ENCODE measurements at regions of chr12 and their contacts with region 1.

Region 1: DNA sequence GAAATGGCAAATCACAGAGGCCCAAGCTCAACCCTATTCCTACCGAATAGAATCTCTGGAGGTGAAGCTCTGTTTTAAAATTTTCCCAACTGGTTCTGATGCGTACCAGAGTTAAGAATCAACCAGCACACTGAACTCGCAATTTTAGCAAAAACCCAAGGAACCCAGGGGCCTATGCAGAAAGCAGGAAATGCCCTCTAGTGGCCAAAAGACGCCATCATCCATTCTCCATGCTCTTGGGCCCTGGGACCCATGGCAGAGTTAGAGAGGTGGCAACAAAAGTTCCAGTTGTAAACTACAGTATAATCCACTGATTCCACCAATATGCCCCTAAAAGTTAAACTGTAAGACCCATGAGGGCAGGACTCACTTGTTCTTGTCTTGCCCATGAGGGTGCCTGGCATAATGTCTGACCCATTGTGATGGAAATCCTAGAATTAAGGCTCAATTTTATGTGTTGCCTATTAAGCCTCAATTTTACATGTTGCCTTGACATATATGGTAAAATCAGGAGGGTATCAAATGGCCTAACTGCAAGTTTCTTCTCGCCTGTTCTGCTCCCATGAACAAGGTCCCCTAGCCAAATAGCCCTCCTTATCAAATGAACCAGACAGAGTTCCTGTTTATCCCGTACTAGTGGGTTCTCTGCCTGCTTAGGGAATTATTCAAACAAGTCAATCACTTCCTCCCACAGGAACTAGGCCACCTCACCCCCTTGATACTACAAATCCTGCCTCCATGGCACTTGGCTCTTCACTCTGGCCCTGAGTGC is 137.5 kb upstream of the CPM start:
- DNase-seq: peak; percentile 45 to 79
- H3K4me3 ChIP-seq: no peak overlapping the region
- H3K4me1 ChIP-seq: peaks cover 13% of the 10 kb centered on the region
- H3K27me3 ChIP-seq: no peaks in the 10 kb centered on the region

Region 2: GRCh38 chr12:68871921-68872320 is 198.6 kb before region 1 on chr12:
- in situ Hi-C with region 1: loop called (anchors 10 kb)
- DNase-seq: peak; percentile 13 to 23
- H3K4me3 ChIP-seq: no peak overlapping the region
- H3K4me1 ChIP-seq: no peaks in the 10 kb centered on the region
- H3K27me3 ChIP-seq: no peaks in the 10 kb centered on the region

Region 3: GRCh38 chr12:69239352-69239921 is 168.9 kb after region 1 on chr12 and contains the start of gene CPSF6:
- in situ Hi-C with region 1: no loop called
- DNase-seq: peak; percentile 93 to 97
- H3K4me3 ChIP-seq: peak within 1 kb of the TSS; percentile 78
- H3K4me1 ChIP-seq: peaks cover 27% of the 10 kb centered on the region
- H3K27me3 ChIP-seq: no peaks in the 10 kb centered on the region

Region 4: GRCh38 chr12:69476276-69477017 is 405.9 kb after region 1 on chr12:
- in situ Hi-C with region 1: no loop called
- DNase-seq: no peak
- H3K4me3 ChIP-seq: no peak overlapping the region
- H3K4me1 ChIP-seq: peaks cover 20% of the 10 kb centered on the region
- H3K27me3 ChIP-seq: no peaks in the 10 kb centered on the region